MCF 10A (cell line): ENCODE measurements at regions of chr14 and their contacts with region 1.

Region 1: DNA sequence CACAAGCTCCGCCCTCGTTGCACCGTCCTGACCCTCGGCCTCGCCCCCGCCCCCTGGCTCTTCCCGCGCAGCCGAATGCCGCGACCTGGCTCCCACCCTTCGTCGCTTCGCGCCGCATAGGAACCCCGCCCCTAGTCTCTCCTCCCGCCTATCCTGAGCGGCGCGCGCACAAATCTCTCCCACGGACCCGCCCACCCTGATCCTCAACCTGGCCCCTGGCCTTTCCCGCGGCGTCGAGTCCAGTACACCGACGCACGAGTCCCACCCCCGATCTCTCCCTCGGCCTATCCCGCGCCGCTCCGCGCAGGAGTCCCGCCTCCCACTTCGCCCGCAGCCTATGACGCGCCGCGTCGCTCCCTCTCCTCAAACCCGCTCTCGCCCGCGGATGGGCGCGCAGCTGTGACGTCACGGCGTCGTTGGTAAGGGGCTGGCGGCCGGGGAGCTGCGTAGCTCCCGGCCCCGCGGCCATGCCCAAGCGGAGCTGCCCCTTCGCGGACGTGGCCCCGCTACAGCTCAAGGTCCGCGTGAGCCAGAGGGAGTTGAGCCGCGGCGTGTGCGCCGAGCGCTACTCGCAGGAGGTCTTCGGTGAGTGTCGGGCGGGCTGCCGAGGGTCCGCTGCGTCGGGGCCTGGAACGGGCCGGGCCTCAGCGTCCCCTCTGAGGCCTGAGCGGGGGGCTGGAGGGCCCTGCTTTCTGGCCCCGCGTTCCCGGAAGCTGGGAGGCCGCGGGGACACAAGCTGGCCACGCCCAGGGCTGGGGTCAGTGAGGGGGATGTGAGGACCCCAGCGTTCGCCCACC is at the start of gene SIVA1:
- DNase-seq: peak; percentile 99
- H3K4me3 Mint-ChIP-seq: peak within 1 kb of the TSS; percentile 92
- H3K27ac Mint-ChIP-seq: peak within 1 kb of the TSS; percentile 92
- H3K4me1 Mint-ChIP-seq: peaks cover 28% of the 10 kb centered on the region
- H3K27me3 Mint-ChIP-seq: no peaks in the 10 kb centered on the region
- CTCF ChIP-seq: no peak
- total RNA-seq, gene SIVA1: 63.3 and 72.7 TPM in 2 replicates

Region 2: DNA sequence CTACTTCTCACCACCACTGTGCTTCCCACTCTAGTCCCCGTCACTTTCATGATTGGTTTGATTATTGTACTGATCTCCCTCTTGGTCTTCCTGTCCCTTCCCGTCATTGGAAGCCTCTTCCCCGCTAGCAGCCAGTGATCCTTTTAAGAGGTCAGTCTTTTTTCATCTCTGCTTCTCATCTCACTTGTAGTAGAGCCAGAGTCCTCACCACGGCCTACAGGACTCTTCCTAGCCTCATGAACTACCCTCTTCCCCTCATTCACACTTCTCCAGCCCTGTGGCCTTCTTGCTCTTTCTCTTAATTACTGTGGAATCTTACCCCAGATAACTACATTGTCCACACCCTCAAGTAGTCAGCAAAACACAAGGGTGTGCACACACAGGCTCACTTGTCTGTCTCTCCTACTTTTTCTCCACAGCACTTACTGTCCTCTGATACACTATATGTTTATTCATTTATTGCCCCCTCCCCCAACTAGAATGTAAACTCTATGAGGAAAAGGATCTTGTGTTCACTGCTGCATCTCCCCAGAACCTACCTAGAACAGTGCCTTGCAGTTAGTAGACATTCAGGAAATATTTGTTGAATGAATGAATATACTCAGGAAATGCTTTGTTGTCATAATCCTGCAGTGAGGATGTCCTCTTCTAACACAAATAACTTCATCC is 1296.6 kb before region 1 on chr14:
- CTCF ChIA-PET with region 1: no interaction called
- POLR2A ChIA-PET with region 1: no interaction called
- intact Hi-C with region 1: no loop called
- DNase-seq: no peak
- H3K4me3 Mint-ChIP-seq: no peak overlapping the region
- H3K27ac Mint-ChIP-seq: no peak overlapping the region
- H3K4me1 Mint-ChIP-seq: peaks cover 9% of the 10 kb centered on the region
- H3K27me3 Mint-ChIP-seq: no peaks in the 10 kb centered on the region
- CTCF ChIP-seq: no peak

Region 3: DNA sequence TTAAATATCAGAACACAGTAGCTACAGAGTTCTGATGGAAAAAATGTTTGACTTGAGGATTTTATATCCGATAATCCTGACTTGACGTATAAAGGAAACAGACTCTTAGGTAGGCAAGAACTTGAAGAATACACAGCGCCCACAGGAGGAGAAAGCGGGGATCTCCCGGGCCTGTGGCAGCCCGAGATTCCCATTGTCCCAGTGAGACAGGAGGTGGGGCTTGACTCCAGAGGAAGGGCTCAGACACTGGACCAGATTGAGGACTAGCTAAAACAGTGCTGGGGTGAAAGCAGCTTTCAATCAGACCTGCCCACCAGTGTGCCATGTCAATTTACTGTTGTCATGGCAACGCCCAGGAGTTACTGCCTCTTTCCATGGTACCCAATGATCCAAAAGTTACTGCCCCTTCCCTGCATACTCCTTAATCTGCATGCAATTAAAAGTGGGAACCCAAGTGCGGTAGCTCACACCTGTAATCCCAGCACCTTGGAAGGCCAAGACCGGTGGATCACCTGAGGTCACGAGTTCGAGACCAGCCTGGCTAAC is 224.4 kb before region 1 on chr14:
- CTCF ChIA-PET with region 1: no interaction called
- POLR2A ChIA-PET with region 1: no interaction called
- intact Hi-C with region 1: no loop called
- DNase-seq: no peak
- H3K4me3 Mint-ChIP-seq: no peak overlapping the region
- H3K27ac Mint-ChIP-seq: no peak overlapping the region
- H3K4me1 Mint-ChIP-seq: peaks cover 13% of the 10 kb centered on the region
- H3K27me3 Mint-ChIP-seq: no peaks in the 10 kb centered on the region
- CTCF ChIP-seq: no peak

Region 4: DNA sequence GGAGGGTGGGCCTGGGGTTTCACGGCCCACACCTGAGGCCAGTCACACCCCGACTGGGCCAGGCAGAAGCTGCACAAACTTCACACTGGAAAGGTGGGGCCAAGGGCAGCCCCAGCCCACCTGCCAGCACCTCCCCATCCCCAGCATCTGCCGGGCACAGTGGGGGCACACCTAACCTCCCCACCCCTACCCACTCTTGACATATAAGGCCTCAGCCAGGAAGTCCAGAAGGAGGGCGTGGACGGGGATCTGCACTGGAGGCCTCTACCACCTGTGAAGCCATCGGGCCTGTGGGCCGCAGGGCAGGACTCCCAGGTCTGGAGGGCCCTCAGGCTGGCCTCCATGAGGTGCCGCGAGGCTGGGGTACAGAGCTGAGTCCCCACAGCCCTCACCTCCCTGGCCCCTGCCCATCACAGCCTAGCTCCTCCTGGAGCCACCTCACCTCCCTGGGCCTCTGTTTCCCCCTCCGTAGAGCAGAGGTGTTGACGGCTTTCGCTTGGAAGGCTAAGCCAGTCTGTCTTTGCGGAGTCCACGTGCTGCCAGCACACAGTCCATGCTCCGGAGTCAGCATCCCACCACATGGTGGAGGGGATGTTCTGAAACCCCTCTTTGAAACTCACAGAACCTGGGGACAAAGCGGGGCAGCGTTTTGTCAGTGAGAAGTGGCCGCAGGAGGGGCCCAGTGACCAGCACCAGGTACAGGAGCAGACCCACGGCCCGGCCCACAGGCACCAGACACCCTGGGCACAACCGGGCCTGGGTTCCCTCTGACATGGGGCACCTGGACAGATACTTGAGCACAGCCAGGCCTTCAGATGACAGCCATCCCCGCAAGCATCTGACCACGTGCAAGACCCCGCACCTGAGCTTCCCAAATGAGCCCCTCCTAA is 101.7 kb before region 1 on chr14:
- CTCF ChIA-PET with region 1: no interaction called
- POLR2A ChIA-PET with region 1: no interaction called
- intact Hi-C with region 1: no loop called
- DNase-seq: no peak
- H3K4me3 Mint-ChIP-seq: no peak overlapping the region
- H3K27ac Mint-ChIP-seq: no peak overlapping the region
- H3K4me1 Mint-ChIP-seq: no peaks in the 10 kb centered on the region
- H3K27me3 Mint-ChIP-seq: peaks cover 17% of the 10 kb centered on the region
- CTCF ChIP-seq: no peak

Region 5: GRCh38 chr14:104689109-104689880 is 63.6 kb before region 1 on chr14 and contains the start of gene INF2:
- CTCF ChIA-PET with region 1: interaction called, 4 read pairs
- POLR2A ChIA-PET with region 1: interaction called, 12 read pairs
- intact Hi-C with region 1: no loop called
- DNase-seq: peak; percentile 76
- H3K4me3 Mint-ChIP-seq: peak within 1 kb of the TSS; percentile 76
- H3K27ac Mint-ChIP-seq: peak within 1 kb of the TSS; percentile 83
- H3K4me1 Mint-ChIP-seq: peaks cover 24% of the 10 kb centered on the region
- H3K27me3 Mint-ChIP-seq: no peaks in the 10 kb centered on the region
- CTCF ChIP-seq: no peak
- total RNA-seq, gene INF2: 91.6 and 102 TPM in 2 replicates

Region 6: DNA sequence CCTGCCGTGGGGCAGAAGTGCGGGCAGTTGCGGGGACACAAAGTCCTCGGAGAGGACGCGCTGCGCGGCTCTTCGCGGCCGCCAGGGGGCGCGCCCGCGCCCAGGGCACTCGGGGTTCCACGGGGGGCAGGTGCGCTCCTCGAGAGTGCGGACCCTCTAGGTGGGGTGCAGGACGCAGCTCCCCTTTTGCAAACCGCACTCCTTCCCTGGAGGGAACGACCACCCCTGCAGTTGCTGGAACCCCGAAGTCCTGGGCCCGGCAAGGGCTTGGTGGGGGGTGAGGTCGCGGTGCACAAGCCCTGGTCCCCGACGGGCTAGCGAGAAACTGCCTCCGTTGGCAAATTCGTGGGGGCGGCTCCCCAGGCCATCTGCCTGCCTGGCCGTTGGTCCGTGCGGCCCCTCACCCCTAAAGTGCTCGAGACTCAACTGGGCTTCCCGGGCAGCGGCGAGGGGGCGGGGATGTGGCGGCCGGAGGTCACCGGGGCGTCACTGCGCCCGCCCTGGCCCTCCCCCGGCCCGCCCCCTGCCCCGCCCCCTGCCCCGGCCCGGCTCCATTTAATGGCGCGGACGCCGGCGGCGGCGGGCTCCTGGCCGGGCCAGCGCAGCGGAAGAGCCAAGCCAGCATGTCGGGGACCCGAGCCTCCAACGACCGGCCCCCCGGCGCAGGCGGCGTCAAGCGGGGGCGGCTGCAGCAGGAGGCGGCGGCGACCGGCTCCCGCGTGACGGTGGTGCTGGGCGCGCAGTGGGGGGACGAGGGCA is 29.1 kb before region 1 on chr14 and contains the start of gene ADSS1:
- CTCF ChIA-PET with region 1: interaction called, 85 read pairs
- POLR2A ChIA-PET with region 1: interaction called, 35 read pairs
- intact Hi-C with region 1: loop called (anchors 1 kb)
- DNase-seq: peak; percentile 52
- H3K4me3 Mint-ChIP-seq: peak within 1 kb of the TSS; percentile 58
- H3K27ac Mint-ChIP-seq: no peak within 1 kb of the TSS
- H3K4me1 Mint-ChIP-seq: no peaks in the 10 kb centered on the region
- H3K27me3 Mint-ChIP-seq: no peaks in the 10 kb centered on the region
- CTCF ChIP-seq: peak; percentile 96
- total RNA-seq, gene ADSS1: 2.9 and 5.2 TPM in 2 replicates

Region 7: DNA sequence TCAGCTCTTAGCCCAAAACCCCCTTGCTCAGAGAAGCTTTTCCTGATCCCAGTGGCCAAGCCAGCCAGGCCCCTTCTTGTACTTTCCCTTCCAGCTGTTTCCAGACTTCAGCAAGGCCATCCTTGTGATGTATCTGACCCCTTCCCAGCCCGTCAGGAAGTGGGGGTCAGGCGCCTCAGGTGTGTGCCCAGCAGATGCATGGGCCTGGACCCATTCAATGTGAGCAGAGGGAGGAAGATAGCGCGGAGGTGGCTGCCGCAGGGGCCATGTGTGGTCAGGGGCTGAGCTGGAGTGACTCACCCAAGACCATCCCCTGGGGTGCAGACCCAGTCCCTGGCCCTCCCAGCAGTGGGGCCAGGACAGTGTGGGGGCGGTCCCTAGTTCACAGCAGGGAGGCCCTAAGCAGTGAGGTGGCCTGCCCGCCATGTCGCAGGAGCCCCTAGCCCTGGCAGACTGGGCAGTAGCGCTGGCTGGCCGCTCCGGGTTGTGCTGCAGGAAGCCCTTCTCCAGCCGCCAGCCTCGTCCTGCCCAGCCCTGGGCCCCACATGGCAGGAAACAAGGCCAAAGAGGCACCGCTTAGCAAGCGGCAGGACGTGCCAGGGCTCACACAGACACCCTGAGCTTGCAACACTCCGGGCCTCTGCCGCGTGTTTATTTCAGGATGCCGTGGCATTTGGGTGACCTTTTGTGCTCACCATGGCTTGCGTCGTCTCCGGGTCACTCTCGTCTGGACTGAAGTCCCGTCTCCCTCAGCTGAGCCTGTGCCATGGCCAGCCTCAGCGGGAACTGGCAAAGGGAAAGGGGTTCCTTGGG is 16.9 kb before region 1 on chr14:
- CTCF ChIA-PET with region 1: interaction called, 12 read pairs
- POLR2A ChIA-PET with region 1: interaction called, 24 read pairs
- intact Hi-C with region 1: loop called (anchors 2 kb)
- DNase-seq: peak; percentile 81
- H3K4me3 Mint-ChIP-seq: peak overlapping the region; percentile 11
- H3K27ac Mint-ChIP-seq: peak overlapping the region; percentile 79
- H3K4me1 Mint-ChIP-seq: peaks cover 21% of the 10 kb centered on the region
- H3K27me3 Mint-ChIP-seq: no peaks in the 10 kb centered on the region
- CTCF ChIP-seq: no peak

Region 8: DNA sequence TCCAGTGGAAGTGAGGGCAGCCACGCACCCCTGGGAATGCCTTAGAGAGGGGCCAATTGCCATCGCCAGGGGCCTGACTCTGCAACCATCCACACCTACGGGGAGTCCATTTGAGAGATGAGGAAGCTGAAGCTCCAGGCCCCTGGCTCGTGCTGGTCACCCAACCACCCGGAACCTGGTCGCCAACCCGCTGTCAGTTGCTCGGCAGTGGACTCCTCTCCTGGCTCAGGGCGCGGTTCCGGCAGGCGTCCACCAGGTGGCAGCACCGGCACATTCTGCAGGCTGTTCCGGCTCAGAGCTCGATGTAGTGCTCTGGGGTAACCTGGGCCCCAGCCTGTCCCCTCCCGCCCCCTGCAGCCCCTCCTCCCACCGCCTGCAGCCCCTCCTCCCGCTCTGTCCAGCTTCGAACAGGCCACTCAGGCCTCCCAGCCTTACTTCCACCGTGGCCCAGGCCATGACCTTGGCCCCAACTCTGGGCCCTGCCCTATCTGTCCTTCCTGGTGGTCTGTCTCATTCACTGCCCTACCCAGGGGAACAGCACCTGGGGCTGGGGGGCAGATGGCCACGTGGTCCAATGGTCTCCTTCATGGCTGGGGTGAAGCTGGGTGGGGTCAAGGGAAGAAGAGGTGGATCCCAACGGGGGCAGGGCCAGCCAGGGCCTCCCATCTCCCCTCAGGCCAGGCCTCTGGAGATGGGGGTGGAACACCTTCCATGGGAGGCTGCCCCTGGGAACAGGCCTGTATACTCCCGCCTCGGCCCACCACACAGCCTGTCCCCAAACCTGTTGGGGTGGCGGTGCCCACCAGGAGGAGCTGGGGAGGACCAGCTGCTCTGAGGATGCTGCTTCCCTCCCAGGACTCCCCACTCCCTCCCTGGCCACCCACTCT is 15.7 kb after region 1 on chr14:
- CTCF ChIA-PET with region 1: interaction called, 47 read pairs
- POLR2A ChIA-PET with region 1: interaction called, 13 read pairs
- intact Hi-C with region 1: no loop called
- DNase-seq: peak; percentile 77
- H3K4me3 Mint-ChIP-seq: no peak overlapping the region
- H3K27ac Mint-ChIP-seq: no peak overlapping the region
- H3K4me1 Mint-ChIP-seq: no peaks in the 10 kb centered on the region
- H3K27me3 Mint-ChIP-seq: no peaks in the 10 kb centered on the region
- CTCF ChIP-seq: peak; percentile 96

Region 9: DNA sequence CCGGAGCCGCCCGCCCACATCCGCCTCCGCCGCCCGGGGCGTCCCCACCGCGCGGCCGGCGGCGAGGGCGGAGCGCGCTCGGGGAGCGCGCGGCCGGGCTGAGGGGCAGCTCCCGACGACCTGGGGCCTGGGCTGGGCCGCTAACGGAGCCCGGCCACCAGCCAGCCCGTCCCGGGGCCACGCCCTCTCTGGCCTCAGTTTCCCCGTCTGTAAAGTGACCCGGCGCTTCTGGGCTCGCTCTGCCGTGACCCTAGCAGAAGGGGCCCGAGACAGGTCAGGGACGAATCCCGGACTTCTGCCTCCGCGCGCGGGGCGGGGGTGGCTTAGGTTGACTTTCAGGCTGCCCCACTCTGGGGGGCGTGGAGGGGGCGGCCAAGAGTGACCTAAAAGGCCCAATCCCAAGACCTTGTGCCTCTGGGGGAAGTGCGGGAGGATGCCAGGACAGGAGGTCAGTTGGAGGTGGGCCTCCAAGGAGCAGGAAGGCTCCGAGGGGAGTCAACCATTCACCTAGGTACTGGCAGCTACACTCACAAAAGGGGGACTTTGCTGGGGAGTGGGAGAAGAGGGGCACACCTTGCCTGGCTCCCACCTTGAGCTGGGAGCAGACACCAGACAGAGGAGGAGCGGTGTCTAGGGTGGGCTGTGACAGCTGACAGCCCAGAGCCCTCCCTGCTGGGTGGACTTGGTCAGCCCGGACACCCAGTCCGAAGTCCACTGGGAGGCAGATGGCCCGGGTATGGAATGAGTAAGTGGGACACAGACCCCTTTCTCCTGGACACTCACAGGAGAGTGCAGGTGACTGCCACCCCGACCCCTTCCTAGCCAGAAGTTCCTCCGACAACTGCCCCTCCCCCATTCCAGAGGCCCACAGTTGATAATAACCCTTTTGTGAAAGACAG is 43.1 kb after region 1 on chr14:
- CTCF ChIA-PET with region 1: no interaction called
- POLR2A ChIA-PET with region 1: interaction called, 10 read pairs
- intact Hi-C with region 1: no loop called
- DNase-seq: peak; percentile 48
- H3K4me3 Mint-ChIP-seq: peak overlapping the region; percentile 85
- H3K27ac Mint-ChIP-seq: no peak overlapping the region
- H3K4me1 Mint-ChIP-seq: peaks cover 32% of the 10 kb centered on the region
- H3K27me3 Mint-ChIP-seq: no peaks in the 10 kb centered on the region
- CTCF ChIP-seq: no peak

Region 10: GRCh38 chr14:104895786-104896661 is 143.1 kb after region 1 on chr14:
- CTCF ChIA-PET with region 1: no interaction called
- POLR2A ChIA-PET with region 1: no interaction called
- intact Hi-C with region 1: no loop called
- DNase-seq: no peak
- H3K4me3 Mint-ChIP-seq: no peak overlapping the region
- H3K27ac Mint-ChIP-seq: no peak overlapping the region
- H3K4me1 Mint-ChIP-seq: no peaks in the 10 kb centered on the region
- H3K27me3 Mint-ChIP-seq: no peaks in the 10 kb centered on the region
- CTCF ChIP-seq: no peak